Activated T-helper 1 cell treated with anti-CD3 and anti-CD28 coated beads, Interleukin-12 subunit alpha, Interleukin-12 subunit beta, Interleukin-2, Interleukin-4 antibody, amounts not matched to agents 30 ng/mL and 10 ng/mL and 1 ng/mL, durations not matched to agents 14 hours and 24 hours and 36 hours (primary cell): ENCODE measurements at regions of chr2 and their contacts with region 1.

Region 1: DNA sequence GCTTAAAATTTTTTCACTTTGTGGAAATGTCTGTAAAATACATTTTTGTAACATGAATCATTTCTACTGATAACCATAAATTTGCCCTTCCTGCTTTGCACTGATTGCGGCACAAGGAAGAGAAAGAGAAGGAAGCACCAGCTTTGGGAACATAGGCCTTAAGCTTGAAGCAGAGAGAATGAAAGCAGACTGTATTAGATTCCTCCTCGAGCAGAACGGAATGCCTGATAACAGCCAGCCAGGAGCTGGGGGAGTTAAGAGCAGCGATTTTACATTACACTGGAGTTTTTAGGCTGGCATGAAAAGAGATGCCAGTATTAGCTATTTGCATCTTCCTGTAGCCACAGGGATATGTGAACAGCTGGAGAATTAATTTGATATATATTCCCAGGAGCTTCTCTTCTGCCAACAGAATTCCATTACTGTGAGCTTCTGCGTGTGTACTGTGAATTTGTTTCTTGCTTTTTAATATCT is 33.5 kb downstream of the CRIM1 start:
- DNase-seq: no peak
- H3K4me3 Mint-ChIP-seq: no peak overlapping the region
- H3K27ac Mint-ChIP-seq: no peak overlapping the region
- H3K4me1 Mint-ChIP-seq: peaks cover 15% of the 10 kb centered on the region
- H3K27me3 Mint-ChIP-seq: peaks cover 24% of the 10 kb centered on the region

Region 2: GRCh38 chr2:35783725-35784124 is 605.4 kb before region 1 on chr2:
- intact Hi-C with region 1: no loop called
- DNase-seq: no peak
- H3K4me3 Mint-ChIP-seq: no peak overlapping the region
- H3K27ac Mint-ChIP-seq: no peak overlapping the region
- H3K4me1 Mint-ChIP-seq: no peaks in the 10 kb centered on the region
- H3K27me3 Mint-ChIP-seq: no peaks in the 10 kb centered on the region

Region 3: GRCh38 chr2:36355151-36355889 is 33.8 kb before region 1 on chr2 and contains the start of gene CRIM1:
- intact Hi-C with region 1: no loop called
- DNase-seq: peak; percentile 42
- H3K4me3 Mint-ChIP-seq: peak within 1 kb of the TSS; percentile 80
- H3K27ac Mint-ChIP-seq: peak within 1 kb of the TSS; percentile 57
- H3K4me1 Mint-ChIP-seq: peaks cover 44% of the 10 kb centered on the region
- H3K27me3 Mint-ChIP-seq: peaks cover 59% of the 10 kb centered on the region
- total RNA-seq, gene CRIM1: 15.3 and 17.6 TPM in 2 replicates

Region 4: GRCh38 chr2:36461039-36461681 is 72.0 kb after region 1 on chr2:
- intact Hi-C with region 1: loop called (anchors 5 kb)
- DNase-seq: no peak
- H3K4me3 Mint-ChIP-seq: no peak overlapping the region
- H3K27ac Mint-ChIP-seq: no peak overlapping the region
- H3K4me1 Mint-ChIP-seq: no peaks in the 10 kb centered on the region
- H3K27me3 Mint-ChIP-seq: peaks cover 2% of the 10 kb centered on the region

Region 5: GRCh38 chr2:36530178-36530982 is 141.3 kb after region 1 on chr2:
- intact Hi-C with region 1: no loop called
- DNase-seq: no peak
- H3K4me3 Mint-ChIP-seq: no peak overlapping the region
- H3K27ac Mint-ChIP-seq: no peak overlapping the region
- H3K4me1 Mint-ChIP-seq: peaks cover 5% of the 10 kb centered on the region
- H3K27me3 Mint-ChIP-seq: no peaks in the 10 kb centered on the region